Transverse colon (tissue), 4 donors: ENCODE measurements at regions of chr2 and their contacts with region 1.

Region 1: GRCh38 chr2:207341804-207342203 is 176.1 kb upstream of the KLF7 start:
- DNase-seq: no peak
- H3K4me3 ChIP-seq: no peak overlapping the region
- H3K27ac ChIP-seq: no peak overlapping the region
- H3K4me1 ChIP-seq: no peaks in the 10 kb centered on the region
- H3K27me3 ChIP-seq: no peaks in the 10 kb centered on the region
- CTCF ChIP-seq: no peak
- EP300 ChIP-seq: no peak
- POLR2A ChIP-seq: no peak

Region 2: GRCh38 chr2:207467716-207468347 is 126.0 kb after region 1 on chr2:
- in situ Hi-C with region 1: loop called in 1 of 4 experiments (anchors 10 kb)
- intact Hi-C with region 1: no loop called
- DNase-seq: no peak
- H3K4me3 ChIP-seq: no peak overlapping the region
- H3K27ac ChIP-seq: no peak overlapping the region
- H3K4me1 ChIP-seq: peaks cover 0 to 4% (median under 1%) of the 10 kb centered on the region in 4 donors
- H3K27me3 ChIP-seq: no peaks in the 10 kb centered on the region
- CTCF ChIP-seq: no peak
- EP300 ChIP-seq: no peak
- POLR2A ChIP-seq: no peak